Right ventricle myocardium inferior (tissue), 1 donor: ENCODE measurements at regions of chr6 and their contacts with region 1.

Region 1: GRCh38 chr6:116667623-116668022 is 943 bp downstream of the ZUP1 start:
- DNase-seq: no peak
- ATAC-seq: no peak

Region 2: GRCh38 chr6:116570856-116571682 is 96.6 kb before region 1 on chr6 and contains the start of gene RWDD1:
- intact Hi-C with region 1: loop called (anchors 5 kb)
- DNase-seq: peak; percentile 99
- ATAC-seq: peak; percentile 99
- total RNA-seq, gene RWDD1: 72.6 TPM

Region 3: DNA sequence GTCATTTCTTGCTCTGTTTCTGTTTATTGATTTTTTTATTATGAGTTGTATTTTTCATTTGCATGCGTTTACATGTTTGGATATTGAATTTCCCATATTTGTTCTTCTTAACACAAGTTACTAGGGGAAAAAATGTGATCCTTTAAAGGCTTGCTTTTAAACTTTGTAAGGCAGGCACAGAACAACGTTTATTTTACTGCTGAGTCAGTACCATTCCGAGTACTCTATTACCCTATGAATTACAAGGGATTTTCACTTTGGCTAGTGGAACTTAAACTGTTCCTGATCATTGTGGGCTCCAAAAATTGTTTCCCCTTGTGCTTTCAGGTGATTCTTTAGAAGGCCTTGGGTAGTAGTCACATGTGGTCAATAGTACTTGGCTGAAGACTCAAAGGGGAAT is 69.4 kb after region 1 on chr6:
- intact Hi-C with region 1: no loop called
- DNase-seq: no peak
- ATAC-seq: no peak